ENCODE measurements at regions of chr14 and their contacts with region 1.

Region 1: DNA sequence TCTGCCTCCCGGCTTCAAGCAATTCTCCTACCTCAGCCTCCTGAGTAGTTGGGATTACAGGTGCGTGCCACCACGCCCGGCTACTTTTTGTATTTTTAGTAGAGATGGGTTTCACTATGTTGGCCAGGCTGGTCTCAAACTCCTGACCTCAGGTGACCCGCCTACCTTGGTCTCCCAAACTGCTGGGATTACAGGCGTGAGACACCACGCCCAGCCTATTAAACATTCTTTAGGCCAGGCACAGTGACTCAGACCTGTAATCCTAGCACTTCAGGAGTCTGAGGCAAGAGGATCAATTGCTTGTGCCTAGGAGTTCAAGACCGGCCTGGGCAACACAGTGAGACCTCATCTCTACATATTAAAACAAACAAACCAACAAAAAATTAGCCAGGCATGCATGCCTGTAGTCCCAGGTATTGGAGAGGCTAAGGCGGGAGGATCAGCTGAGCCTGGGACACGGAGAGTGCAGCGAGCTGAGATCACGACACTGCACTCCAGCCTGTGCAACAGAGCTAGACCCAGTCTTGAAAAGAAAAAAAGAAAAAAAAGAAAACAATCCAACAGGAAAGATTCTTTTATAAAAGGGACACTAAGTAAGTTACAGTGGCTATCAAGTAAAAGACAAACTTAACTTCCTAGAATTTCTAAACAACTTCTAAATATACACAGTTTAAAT is 70.2 kb downstream of the HECTD1 start:
- DNase-seq: no peak
- ATAC-seq: no peak

Region 2: GRCh38 chr14:31340297-31341063 is 203.1 kb after region 1 on chr14:
- intact Hi-C with region 1: loop called (anchors 10 kb)
- DNase-seq: no peak
- ATAC-seq: no peak

Measured in Right ventricle myocardium superior (tissue), 1 donor.